Psoas muscle (tissue), 8 donors: ENCODE measurements at regions of chr4 and their contacts with region 1.

Region 1: DNA sequence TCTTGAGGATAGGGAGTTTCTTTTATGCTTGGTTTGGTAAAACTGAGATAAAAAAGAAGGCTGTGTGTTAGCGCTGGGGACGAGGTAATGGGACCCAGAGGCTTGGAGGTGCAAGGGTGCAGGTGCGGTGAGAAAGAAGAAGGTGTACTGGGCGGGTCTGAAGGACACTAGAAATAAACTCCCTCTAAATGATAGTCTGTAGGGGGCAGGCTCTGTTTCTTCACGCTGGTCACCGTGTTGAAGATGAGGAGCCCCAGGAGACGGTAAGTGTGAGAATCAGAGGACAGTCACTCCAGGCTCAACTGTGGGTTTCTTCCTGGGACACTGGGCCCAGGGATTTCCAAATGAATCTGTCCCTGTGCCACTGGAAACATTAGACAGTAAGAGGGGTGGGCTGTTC is 131.4 kb downstream of the SORBS2 start:
- DNase-seq: no peak
- ATAC-seq: no peak
- H3K4me3 ChIP-seq: no peak overlapping the region
- H3K27ac ChIP-seq: no peak overlapping the region
- H3K4me1 ChIP-seq: no peaks in the 10 kb centered on the region
- H3K27me3 ChIP-seq: no peaks in the 10 kb centered on the region
- CTCF ChIP-seq: no peak

Region 2: DNA sequence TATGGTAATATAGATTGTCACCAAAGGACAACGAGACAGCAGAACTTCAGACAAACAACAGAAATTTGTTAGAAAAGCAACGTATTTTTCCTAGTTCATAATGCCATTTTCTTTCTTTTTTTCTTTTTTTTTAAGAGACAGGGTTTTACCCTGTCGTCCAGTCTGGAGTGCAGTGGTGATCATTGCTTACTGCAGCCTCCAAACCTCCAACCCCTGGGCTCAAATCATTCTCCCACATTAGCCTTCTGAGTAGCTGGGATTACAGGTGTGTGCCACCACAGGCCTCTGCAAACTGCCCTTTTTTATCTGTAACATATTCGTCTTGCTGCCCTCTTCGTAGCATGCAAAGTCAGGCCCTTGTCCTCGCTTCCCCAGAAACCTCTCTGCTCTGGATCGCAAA is 28.8 kb before region 1 on chr4:
- intact Hi-C with region 1: loop called in 1 of 2 experiments (anchors 1 kb)
- DNase-seq: no peak
- ATAC-seq: no peak
- H3K4me3 ChIP-seq: no peak overlapping the region
- H3K27ac ChIP-seq: no peak overlapping the region
- H3K4me1 ChIP-seq: peaks cover under 1% of the 10 kb centered on the region
- H3K27me3 ChIP-seq: no peaks in the 10 kb centered on the region
- CTCF ChIP-seq: no peak

Region 3: GRCh38 chr4:185859111-185859510 is 178.5 kb after region 1 on chr4:
- intact Hi-C with region 1: no loop called
- DNase-seq: no peak
- ATAC-seq: no peak
- H3K4me3 ChIP-seq: no peak overlapping the region
- H3K27ac ChIP-seq: no peak overlapping the region
- H3K4me1 ChIP-seq: no peaks in the 10 kb centered on the region
- H3K27me3 ChIP-seq: no peaks in the 10 kb centered on the region
- CTCF ChIP-seq: no peak

Region 4: GRCh38 chr4:186765138-186765537 is 1084.5 kb after region 1 on chr4:
- intact Hi-C with region 1: no loop called
- DNase-seq: peak in 1 of 2 donors; percentile 24
- ATAC-seq: no peak
- H3K4me3 ChIP-seq: no peak overlapping the region
- H3K27ac ChIP-seq: no peak overlapping the region
- H3K4me1 ChIP-seq: no peaks in the 10 kb centered on the region
- H3K27me3 ChIP-seq: no peaks in the 10 kb centered on the region
- CTCF ChIP-seq: no peak